ENCODE measurements at regions of chr10 and their contacts with region 1.

Region 1: GRCh38 chr10:27558612-27559020 is 54.5 kb downstream of the RAB18 start:
- DNase-seq: peak; percentile 36
- ATAC-seq: peak; percentile 84 to 87

Region 2: DNA sequence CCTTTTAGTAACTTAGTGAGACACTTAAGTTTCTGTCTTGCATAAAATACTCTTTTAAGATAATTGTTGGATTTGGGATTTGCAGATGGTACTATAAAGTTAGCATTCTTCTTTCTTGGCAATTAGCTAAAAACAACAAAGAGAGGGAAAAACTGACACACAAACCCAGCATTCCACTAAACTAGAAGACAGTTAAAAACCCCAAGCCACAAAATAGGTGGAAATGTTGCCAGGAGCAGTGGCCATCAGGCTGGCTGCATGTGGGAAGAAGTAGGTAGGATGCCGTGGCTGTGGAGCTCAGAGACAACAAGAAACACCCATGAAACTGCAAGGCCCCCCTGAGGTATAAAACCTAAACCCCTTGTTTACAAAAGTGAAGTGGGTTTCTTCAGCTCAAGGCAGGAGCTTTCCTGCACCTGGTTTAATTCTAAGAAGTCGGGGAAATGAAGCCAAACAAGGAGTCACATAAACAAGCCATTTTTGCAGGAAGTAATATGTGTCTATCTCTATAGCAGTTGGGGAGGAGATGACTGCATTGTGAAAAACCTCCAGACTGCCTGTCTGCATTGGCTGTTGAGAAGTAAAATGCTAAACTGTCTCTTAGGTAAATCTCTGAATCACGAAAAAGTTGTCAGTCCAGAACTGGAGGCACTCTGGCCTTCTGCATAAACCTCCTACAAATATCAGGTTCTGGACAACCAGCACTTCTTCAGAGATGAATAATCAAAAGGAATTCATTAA is 45.0 kb before region 1 on chr10:
- intact Hi-C with region 1: no loop called
- DNase-seq: no peak
- ATAC-seq: peak in 1 of 2 donors; percentile 47

Region 3: GRCh38 chr10:27661514-27662286 is 103.1 kb after region 1 on chr10:
- intact Hi-C with region 1: loop called (anchors 1 to 10 kb)
- DNase-seq: no peak
- ATAC-seq: no peak

Region 4: DNA sequence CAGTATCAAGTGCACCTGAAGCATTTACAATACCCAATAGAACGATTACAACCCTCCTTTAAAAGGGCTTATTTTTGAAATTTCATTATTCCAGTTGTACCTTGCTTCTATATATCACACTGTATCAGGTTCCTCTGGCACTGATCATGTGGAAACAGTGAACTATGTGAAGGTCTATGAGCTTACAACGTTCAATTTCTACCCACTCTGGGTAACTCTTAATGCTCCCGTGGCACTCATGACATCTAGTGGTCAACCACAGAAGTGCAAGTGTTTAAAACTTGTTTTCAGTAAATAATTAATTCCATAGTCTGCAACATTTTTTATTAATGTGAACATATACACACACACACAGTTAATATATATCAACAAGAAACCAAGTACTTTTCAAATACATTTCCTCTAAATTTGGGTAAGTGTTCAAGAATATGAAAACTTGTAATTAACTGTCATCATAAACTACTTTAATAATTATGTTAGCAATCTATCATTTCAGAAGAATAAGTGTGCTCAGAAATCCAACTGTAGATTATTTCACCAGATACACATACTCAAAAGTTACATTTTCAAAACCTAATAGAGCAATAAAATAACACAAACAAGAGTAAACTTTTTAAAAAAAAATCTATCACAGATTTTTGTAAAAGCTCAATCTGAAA is 683.3 kb after region 1 on chr10:
- intact Hi-C with region 1: loop called in 1 of 2 experiments (anchors 5 kb)
- DNase-seq: no peak
- ATAC-seq: peak; percentile 79 to 82